Left cardiac atrium (tissue), 4 donors: ENCODE measurements at regions of chr2 and their contacts with region 1.

Region 1: GRCh38 chr2:191376981-191377629 is 131.9 kb downstream of the MYO1B start:
- DNase-seq: peak; percentile 72
- ATAC-seq: peak; percentile 99 to 100

Region 2: GRCh38 chr2:191245046-191245868 is 131.8 kb before region 1 on chr2 and contains the start of gene MYO1B:
- intact Hi-C with region 1: loop called in 1 of 2 experiments (anchors 10 kb)
- DNase-seq: peak; percentile 69
- ATAC-seq: peak; percentile 87 to 93
- total RNA-seq, gene MYO1B: 18.6 to 26.3 TPM